Dorsolateral prefrontal cortex (tissue), 120 donors: ENCODE measurements at regions of chr13 and their contacts with region 1.

Region 1: GRCh38 chr13:75549262-75550158 is at the start of gene UCHL3:
- DNase-seq: peak; percentile 90 to 96 (median 94)
- H3K4me3 ChIP-seq: peak within 1 kb of the TSS; percentile 62 to 99 (median 93)
- H3K27ac ChIP-seq: peak within 1 kb of the TSS; percentile 27 to 96 (median 87)
- H3K27me3 ChIP-seq: no peaks in the 10 kb centered on the region
- CTCF ChIP-seq: peak; percentile 36 to 97 (median 89)
- total RNA-seq, gene UCHL3: 10.6 to 31.0 (median 20.0) TPM

Region 2: DNA sequence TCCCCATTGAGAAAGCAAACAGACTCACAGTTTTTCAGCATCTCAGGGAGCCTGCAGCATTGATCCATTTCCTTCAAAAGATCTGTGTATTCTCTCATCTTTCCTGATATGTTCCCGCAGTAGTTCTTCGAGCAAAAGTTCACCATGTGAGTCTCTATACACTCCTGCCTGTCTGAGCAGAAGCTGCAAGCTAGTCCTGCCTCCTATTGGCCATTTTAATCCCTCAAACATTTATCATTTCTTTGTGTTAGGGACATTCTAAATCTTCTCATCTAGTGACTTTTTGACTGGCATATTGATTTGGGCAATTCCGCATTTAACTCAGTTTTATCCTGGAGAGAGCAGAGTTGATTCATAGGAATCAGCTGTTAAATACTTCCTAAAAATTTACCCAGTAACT is 754.9 kb before region 1 on chr13:
- intact Hi-C with region 1: no loop called
- DNase-seq: no peak
- H3K4me3 ChIP-seq: no peak overlapping the region
- H3K27ac ChIP-seq: peak overlapping the region in 30 of 59 donors; percentile 20 to 92 (median 80)
- H3K27me3 ChIP-seq: no peaks in the 10 kb centered on the region
- CTCF ChIP-seq: peak in 17 of 56 donors; percentile 9 to 47 (median 17)

Region 3: DNA sequence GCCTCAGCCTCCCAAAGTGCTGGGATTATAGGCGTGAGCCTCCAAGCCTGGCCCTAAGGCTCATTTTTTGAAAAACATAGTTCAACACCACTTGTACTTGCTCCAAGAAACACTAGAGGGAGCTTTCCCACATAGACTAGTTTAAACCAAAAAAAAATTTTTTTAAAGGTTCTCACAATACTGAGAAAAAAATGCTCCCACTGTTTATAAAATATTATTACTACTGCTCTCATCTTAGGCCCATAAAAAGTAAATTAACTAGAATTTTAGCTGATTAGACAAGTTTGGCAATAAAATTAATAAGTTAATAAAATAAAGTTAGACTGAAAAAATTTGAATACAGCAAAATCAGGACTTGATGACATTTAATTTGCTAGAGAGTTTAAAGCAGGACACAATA is 177.0 kb before region 1 on chr13:
- intact Hi-C with region 1: loop called (anchors 5 to 10 kb)
- DNase-seq: no peak
- H3K4me3 ChIP-seq: no peak overlapping the region
- H3K27ac ChIP-seq: peak overlapping the region in 6 of 59 donors; percentile 2 to 43 (median 34)
- H3K27me3 ChIP-seq: no peaks in the 10 kb centered on the region
- CTCF ChIP-seq: peak; percentile 62 to 84 (median 74)

Region 4: GRCh38 chr13:75537401-75538365 is 11.8 kb before region 1 on chr13 and contains the start of gene COMMD6:
- intact Hi-C with region 1: loop called in 1 of 2 experiments (anchors 1 kb)
- DNase-seq: peak; percentile 53 to 86 (median 81)
- H3K4me3 ChIP-seq: peak within 1 kb of the TSS; percentile 60 to 99 (median 93)
- H3K27ac ChIP-seq: peak within 1 kb of the TSS; percentile 25 to 92 (median 77)
- H3K27me3 ChIP-seq: no peaks in the 10 kb centered on the region
- CTCF ChIP-seq: peak in 55 of 56 donors; percentile 26 to 84 (median 63)
- total RNA-seq, gene COMMD6: 34.4 to 94.2 (median 57.6) TPM